H1 (cell line): ENCODE measurements at regions of chr1 and their contacts with region 1.

Region 1: GRCh38 chr1:160951443-160952128 is 3.0 kb downstream of the ITLN2 start:
- DNase-seq: peak; percentile 36 to 82
- H3K4me3 ChIP-seq: no peak overlapping the region
- H3K27ac ChIP-seq: no peak overlapping the region
- H3K4me1 ChIP-seq: peaks cover 0 to 9% (median 3%) of the 10 kb centered on the region in 4 experiments; a peak in 6 of 7 replicates
- H3K27me3 ChIP-seq: no peaks in the 10 kb centered on the region
- CTCF ChIP-seq: peak; percentile 85 to 97 (median 88)
- EP300 ChIP-seq: no peak
- POLR2A ChIP-seq: no peak
- RAD21 ChIP-seq: peak; percentile 77 to 87

Region 2: DNA sequence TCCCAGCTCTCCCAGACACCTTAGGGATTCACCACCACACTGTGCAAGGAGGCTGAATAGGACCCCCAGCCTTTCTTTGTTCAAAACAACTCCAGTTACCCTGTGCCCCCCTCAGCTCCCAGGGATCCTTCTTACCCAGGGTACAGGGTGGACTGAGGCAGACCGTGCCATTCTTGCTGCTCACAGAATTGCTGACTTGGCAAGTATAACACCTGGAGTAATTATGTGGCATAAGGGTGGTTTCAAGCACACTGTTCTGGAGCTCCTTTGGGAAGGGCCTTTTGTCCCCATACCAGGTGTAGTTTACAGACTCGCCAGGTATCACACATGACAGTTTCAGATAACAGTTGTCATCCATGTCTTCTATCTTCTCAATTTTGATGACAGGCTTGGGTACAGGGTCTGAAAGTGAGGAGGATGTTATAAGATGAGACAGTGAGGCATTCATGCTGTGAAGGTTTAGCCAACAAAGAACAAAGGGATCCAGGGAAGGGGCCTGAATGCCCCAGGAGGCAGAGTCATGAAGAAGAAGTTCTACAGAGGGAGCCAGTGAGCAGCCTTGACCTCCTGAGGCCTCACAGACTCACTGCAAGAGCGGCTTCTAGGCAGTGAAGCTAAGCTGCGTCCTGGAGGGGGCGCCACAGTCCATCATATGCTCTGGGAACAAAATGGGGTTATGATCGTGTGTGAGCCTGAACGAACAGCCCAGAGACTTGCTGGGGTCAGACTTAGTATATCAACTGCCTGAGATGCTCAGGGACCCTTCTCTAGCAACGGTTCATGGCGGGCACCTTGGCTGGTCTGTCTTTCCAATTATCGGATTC is 270.3 kb before region 1 on chr1:
- CTCF ChIA-PET with region 1: interaction called, 77 read pairs
- POLR2A ChIA-PET with region 1: no interaction called
- DNase-seq: peak; percentile 90 to 92
- H3K4me3 ChIP-seq: no peak overlapping the region
- H3K27ac ChIP-seq: no peak overlapping the region
- H3K4me1 ChIP-seq: peaks cover 0 to 4% (median 0%) of the 10 kb centered on the region in 4 experiments; a peak in 1 of 7 replicates
- H3K27me3 ChIP-seq: no peaks in the 10 kb centered on the region
- CTCF ChIP-seq: peak; percentile 98 to 100 (median 99)
- EP300 ChIP-seq: no peak
- POLR2A ChIP-seq: no peak
- RAD21 ChIP-seq: peak; percentile 98 to 99

Region 3: DNA sequence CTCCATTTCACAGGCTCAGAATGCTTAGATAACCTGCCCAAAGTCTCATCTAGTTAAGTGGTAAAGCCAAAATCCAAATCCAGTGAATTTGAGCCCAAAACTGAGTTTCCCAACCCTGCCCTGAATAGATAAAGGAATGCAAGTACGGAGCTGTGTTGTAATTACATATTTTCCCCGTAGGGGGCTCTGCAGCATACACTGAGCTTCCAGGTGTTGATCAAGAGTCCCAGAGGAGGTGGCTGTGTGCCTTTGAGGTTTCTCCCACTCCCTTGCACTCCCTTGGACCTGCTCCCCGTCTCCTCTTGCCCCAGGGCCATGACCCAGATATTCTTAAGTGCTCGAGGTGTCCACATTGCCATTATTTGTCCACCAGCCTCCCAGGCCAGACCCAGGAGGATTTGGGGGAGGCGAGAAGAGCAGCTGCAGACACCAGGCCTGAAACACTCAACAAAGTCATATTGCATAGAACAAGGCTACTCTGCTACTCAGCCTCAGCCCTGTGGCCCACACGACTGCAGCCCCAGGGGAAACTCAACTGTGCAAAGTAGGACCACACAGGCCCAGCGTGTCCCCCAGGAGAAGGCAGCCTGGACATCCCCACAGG is 174.0 kb before region 1 on chr1:
- CTCF ChIA-PET with region 1: interaction called, 30 read pairs
- POLR2A ChIA-PET with region 1: no interaction called
- DNase-seq: peak in 1 of 2 experiments; percentile 70
- H3K4me3 ChIP-seq: no peak overlapping the region
- H3K27ac ChIP-seq: no peak overlapping the region
- H3K4me1 ChIP-seq: no peaks in the 10 kb centered on the region
- H3K27me3 ChIP-seq: no peaks in the 10 kb centered on the region
- CTCF ChIP-seq: peak; percentile 26 to 71 (median 67)
- EP300 ChIP-seq: no peak
- POLR2A ChIP-seq: no peak
- RAD21 ChIP-seq: peak; percentile 67 to 70

Region 4: GRCh38 chr1:160911441-160911840 is 40.1 kb before region 1 on chr1:
- CTCF ChIA-PET with region 1: interaction called, 43 read pairs
- POLR2A ChIA-PET with region 1: no interaction called
- DNase-seq: no peak
- H3K4me3 ChIP-seq: no peak overlapping the region
- H3K27ac ChIP-seq: no peak overlapping the region
- H3K4me1 ChIP-seq: peaks cover 0 to 7% (median 0%) of the 10 kb centered on the region in 4 experiments; a peak in 2 of 7 replicates
- H3K27me3 ChIP-seq: no peaks in the 10 kb centered on the region
- CTCF ChIP-seq: no peak
- EP300 ChIP-seq: no peak
- POLR2A ChIP-seq: no peak
- RAD21 ChIP-seq: no peak

Region 5: DNA sequence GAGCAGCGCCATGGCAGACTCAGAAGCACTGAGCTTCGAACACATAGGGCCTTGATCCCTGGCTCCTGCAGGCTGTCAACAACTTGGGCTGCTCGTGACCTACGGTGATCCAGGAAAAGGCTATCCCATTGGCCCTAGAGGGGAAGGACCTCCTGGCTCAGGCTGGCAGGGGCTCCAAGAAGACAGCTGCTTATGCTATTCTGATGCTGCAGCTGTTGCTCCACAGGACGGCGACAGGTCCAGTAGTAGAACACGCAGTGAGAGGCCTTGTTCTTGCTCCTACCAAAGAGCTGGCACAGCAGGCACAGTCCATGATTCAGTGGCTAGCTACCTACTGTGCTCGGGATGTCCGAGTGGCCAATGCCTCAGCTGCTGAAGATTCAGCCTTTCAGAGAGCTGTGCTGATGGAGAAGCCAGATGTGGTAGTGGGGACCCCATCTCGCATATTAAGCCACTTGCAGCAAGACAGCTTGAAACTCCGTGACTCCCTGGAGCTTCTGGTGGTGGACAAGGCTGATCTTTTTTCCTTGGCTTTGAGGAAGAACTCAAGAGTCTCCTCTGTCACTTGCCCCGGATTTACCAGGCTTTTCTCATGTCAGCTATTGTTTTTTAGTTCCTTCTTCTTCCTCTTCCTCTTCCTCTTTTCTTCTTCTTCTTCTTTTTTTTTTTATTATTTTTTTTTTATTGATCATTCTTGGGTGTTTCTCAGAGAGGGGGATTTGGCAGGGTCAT is 15.9 kb before region 1 on chr1:
- CTCF ChIA-PET with region 1: interaction called, 65 read pairs
- POLR2A ChIA-PET with region 1: interaction called, 4 read pairs
- DNase-seq: no peak
- H3K4me3 ChIP-seq: no peak overlapping the region
- H3K27ac ChIP-seq: no peak overlapping the region
- H3K4me1 ChIP-seq: no peaks in the 10 kb centered on the region
- H3K27me3 ChIP-seq: no peaks in the 10 kb centered on the region
- CTCF ChIP-seq: no peak
- EP300 ChIP-seq: no peak
- POLR2A ChIP-seq: no peak
- RAD21 ChIP-seq: no peak

Region 6: GRCh38 chr1:160987359-160988062 is 35.9 kb after region 1 on chr1:
- CTCF ChIA-PET with region 1: interaction called, 76 read pairs
- POLR2A ChIA-PET with region 1: interaction called, 5 read pairs
- DNase-seq: no peak
- H3K4me3 ChIP-seq: peak overlapping the region in 1 of 4 experiments; percentile 34; a peak in 4 of 8 replicates
- H3K27ac ChIP-seq: peak overlapping the region; percentile 55
- H3K4me1 ChIP-seq: peaks cover 5 to 16% (median 9%) of the 10 kb centered on the region in 4 experiments; a peak in 6 of 7 replicates
- H3K27me3 ChIP-seq: no peaks in the 10 kb centered on the region
- CTCF ChIP-seq: no peak
- EP300 ChIP-seq: no peak
- POLR2A ChIP-seq: no peak
- RAD21 ChIP-seq: no peak